ENCODE measurements at regions of chr3 and their contacts with region 1.

Region 1: GRCh38 chr3:13045904-13046568 is 27.2 kb downstream of the IQSEC1 start:
- DNase-seq: peak; percentile 91
- H3K4me3 ChIP-seq: peak overlapping the region; percentile 43
- H3K27ac ChIP-seq: peak overlapping the region; percentile 94
- H3K4me1 ChIP-seq: peaks cover 79% of the 10 kb centered on the region
- CTCF ChIP-seq: no peak

Region 2: DNA sequence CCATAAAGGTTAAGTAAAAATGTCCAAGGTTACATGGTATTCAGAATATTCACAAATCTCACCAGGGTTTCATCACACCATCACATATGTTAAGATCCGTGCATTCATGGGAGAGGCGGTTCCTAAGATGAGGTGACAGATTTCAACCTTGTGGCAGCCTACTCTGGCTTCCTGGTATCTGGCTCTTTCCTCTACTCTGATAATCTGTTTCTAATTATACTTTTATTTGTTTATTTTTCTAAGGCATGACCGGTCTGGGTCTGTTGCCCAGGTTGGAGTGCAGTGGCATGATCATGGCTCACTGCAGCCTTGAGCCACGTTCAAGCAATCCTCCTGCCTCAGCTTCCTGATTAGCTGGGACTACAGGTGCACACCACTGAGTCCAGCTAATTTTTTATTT is 416.5 kb before region 1 on chr3:
- CTCF ChIA-PET with region 1: no interaction called
- POLR2A ChIA-PET with region 1: no interaction called
- intact Hi-C with region 1: no loop called
- DNase-seq: no peak
- H3K4me3 ChIP-seq: no peak overlapping the region
- H3K27ac ChIP-seq: no peak overlapping the region
- H3K4me1 ChIP-seq: peaks cover 25% of the 10 kb centered on the region
- CTCF ChIP-seq: no peak

Region 3: DNA sequence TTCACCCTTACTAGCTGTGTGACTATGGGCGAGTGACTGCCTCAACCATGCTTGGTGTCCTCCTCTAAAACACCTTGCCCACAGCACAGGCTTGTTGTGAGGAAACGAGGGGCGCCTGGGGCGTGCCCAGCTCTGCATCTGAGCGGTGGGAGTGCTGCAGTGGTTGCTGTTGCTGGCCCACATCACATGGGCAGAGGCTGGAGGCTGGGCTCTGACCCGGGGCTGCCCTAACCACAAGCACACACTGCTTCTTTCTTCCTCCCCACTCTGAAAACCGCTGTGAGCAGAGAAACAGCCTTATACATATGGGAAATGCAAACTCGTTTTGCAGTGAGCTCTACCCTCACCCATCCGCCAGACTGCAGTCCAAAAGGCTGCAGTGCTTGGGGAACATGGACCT is 129.9 kb before region 1 on chr3:
- CTCF ChIA-PET with region 1: no interaction called
- POLR2A ChIA-PET with region 1: no interaction called
- intact Hi-C with region 1: no loop called
- DNase-seq: no peak
- H3K4me3 ChIP-seq: no peak overlapping the region
- H3K27ac ChIP-seq: no peak overlapping the region
- H3K4me1 ChIP-seq: peaks cover 10% of the 10 kb centered on the region
- CTCF ChIP-seq: no peak

Region 4: DNA sequence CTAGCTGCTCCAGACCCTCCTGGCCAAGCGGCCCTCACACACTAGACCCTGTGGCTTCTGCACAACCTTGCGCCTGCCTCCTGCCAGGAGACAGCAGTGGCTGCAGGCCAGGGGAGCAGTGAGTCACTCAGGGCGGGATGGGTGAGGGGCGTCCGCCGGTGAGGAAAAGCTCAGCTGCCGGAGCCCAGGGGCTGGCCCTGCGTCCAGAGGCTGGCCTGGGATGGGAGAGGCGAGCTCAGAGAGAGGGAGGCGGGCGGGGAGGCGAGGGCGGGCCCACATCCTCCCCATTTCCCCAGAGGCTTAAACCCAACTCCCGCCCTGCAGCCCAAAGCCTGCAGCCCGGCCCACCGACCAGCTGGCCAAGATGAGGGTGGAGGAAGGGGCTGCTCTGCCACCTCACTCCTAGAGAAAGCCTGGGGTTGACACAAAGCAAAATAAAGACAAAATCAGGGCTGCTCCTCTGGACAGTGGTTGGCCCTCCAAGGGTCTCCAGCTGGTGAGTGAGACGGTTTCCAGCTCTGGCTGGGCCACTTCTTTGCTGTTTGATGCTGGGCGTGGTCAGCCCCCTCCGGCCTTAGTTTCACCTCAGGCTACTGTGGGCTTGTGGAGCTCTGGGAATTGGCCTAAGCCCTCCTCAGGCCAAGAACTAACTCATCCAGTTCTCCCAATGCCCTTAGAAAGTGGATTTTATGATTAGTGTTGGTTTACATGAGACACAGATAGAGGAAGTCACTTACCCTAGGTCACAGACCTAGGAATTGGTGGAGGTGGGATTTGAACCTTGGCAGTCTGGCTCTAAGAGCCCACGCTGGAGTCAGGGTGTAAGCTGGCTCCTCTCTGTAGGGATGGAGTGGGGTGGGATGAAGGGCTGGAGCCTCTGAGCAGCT is 23.4 kb before region 1 on chr3:
- CTCF ChIA-PET with region 1: interaction called, 3 read pairs
- POLR2A ChIA-PET with region 1: interaction called, 11 read pairs
- intact Hi-C with region 1: no loop called
- DNase-seq: peak; percentile 75
- H3K4me3 ChIP-seq: peak overlapping the region; percentile 70
- H3K27ac ChIP-seq: peak overlapping the region; percentile 67
- H3K4me1 ChIP-seq: peaks cover 65% of the 10 kb centered on the region
- CTCF ChIP-seq: no peak

Region 5: GRCh38 chr3:13073326-13074005 is 27.4 kb after region 1 on chr3 and contains the start of gene IQSEC1:
- CTCF ChIA-PET with region 1: no interaction called
- POLR2A ChIA-PET with region 1: interaction called, 10 read pairs
- intact Hi-C with region 1: loop called (anchors 1 kb)
- DNase-seq: peak; percentile 93
- H3K4me3 ChIP-seq: peak within 1 kb of the TSS; percentile 77
- H3K27ac ChIP-seq: peak within 1 kb of the TSS; percentile 78
- H3K4me1 ChIP-seq: peaks cover 87% of the 10 kb centered on the region
- CTCF ChIP-seq: peak; percentile 38; the same call in 1 of the 2 replicates
- total RNA-seq, gene IQSEC1: 24.3 and 25.2 TPM in 2 replicates

Region 6: DNA sequence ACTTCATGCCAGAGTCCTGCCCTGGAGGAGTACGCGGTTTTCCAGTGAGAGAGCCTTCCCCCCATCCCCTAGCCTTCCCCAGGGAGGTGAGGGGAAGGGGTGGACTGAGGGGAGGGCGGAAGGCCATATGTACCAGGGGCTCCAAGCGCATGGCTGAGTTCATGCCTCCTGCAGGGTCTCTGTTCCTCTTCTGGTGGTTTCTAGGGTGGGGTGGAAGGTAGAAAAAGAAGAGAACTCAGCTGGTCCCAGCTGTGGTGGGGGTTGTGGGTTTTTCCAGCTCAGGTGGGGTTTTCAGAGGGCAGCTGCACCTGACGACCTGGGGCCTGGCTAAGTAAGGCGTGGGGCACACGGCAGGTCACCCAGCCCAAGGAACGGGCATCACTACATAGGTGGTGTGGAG is 37.9 kb after region 1 on chr3:
- CTCF ChIA-PET with region 1: no interaction called
- POLR2A ChIA-PET with region 1: interaction called, 9 read pairs
- intact Hi-C with region 1: loop called (anchors 1 kb)
- DNase-seq: peak; percentile 88
- H3K4me3 ChIP-seq: peak overlapping the region; percentile 21
- H3K27ac ChIP-seq: peak overlapping the region; percentile 87
- H3K4me1 ChIP-seq: peaks cover 91% of the 10 kb centered on the region
- CTCF ChIP-seq: no peak

Region 7: DNA sequence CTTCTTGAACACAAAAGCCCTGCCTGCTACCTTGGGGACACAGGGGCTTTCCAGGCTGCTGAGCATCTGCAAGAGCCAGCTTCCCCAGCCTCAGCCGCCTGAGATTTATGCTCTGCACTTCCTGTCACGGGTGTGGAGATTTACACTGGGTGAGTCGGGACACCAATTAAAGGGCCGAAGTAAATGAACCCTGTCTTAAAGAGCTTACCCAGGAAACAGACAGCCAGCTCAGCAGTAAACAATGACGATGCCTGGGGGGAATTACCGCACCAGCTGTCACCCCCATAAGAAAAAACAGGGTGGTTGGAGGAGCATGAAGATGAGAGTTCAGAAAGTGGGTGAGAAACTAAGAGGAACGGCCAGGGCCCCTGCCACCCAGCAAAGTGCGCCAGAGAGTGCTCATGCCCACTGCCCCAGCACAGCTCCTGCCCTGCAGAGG is 64.7 kb after region 1 on chr3:
- CTCF ChIA-PET with region 1: no interaction called
- POLR2A ChIA-PET with region 1: no interaction called
- intact Hi-C with region 1: loop called (anchors 2 kb)
- DNase-seq: peak; percentile 94
- H3K4me3 ChIP-seq: peak overlapping the region; percentile 54
- H3K27ac ChIP-seq: peak overlapping the region; percentile 84
- H3K4me1 ChIP-seq: peaks cover 45% of the 10 kb centered on the region
- CTCF ChIP-seq: no peak

Region 8: DNA sequence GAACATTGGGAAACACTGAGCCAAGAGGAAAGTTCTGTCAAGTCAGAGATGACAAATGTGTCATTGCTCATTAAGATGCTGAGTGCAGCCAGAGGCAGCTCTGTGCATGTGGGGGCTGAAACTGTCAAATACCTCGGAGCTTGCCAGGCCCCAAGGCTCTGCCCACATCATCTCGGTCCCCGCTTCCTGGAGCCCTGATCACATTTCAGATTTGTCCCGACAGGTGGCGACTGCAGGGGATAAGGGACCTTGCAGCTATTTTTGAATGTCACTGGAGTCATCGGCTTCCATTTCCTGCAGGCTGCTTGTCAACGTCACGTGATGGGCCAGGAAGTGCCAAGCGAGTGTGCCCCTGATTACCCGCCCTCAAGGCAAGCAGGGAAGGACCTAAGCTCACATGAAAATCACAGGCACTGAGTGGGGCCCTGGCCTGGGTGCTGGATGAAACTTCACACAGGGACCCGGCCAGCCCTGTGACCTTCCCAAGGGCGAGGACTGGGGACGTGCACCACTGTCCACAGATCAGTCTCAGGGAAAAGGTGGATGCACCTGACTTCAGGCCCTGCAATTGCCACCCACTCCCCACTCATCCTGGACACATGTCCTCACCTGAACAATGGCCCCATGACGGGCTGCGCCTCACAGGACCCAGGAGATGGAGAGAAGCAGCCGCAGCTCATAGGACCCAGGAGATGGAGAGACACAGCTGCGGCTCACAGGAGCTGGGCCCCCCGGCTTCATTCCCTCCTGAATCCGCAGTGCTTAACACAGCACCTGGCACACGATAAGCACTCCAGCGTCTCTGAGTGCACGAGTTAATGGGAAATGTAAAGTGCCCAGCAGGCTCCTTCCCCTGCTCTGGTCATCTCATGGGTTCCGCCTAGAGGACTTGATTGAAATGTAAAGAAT is 300.7 kb after region 1 on chr3:
- CTCF ChIA-PET with region 1: no interaction called
- POLR2A ChIA-PET with region 1: no interaction called
- intact Hi-C with region 1: no loop called
- DNase-seq: no peak
- H3K4me3 ChIP-seq: no peak overlapping the region
- H3K27ac ChIP-seq: no peak overlapping the region
- H3K4me1 ChIP-seq: no peaks in the 10 kb centered on the region
- CTCF ChIP-seq: no peak

Measured in OCI-LY7 (cell line).